CD4-positive, alpha-beta T cell (primary cell): ENCODE measurements at regions of chr5 and their contacts with region 1.

Region 1: GRCh38 chr5:157245477-157245876 is 20.4 kb upstream of the CYFIP2 start:
- DNase-seq: no peak
- ATAC-seq: no peak
- H3K4me3 ChIP-seq: no peak overlapping the region
- H3K4me3 Mint-ChIP-seq: no peak overlapping the region
- H3K27ac ChIP-seq: no peak overlapping the region
- H3K27ac Mint-ChIP-seq: peak overlapping the region; percentile 91
- H3K4me1 ChIP-seq: peaks cover 60% of the 10 kb centered on the region
- H3K4me1 Mint-ChIP-seq: peaks cover 68% of the 10 kb centered on the region
- H3K27me3 ChIP-seq: no peaks in the 10 kb centered on the region
- H3K27me3 Mint-ChIP-seq: no peaks in the 10 kb centered on the region
- CTCF ChIP-seq: no peak

Region 2: GRCh38 chr5:156774273-156774672 is 471.2 kb before region 1 on chr5:
- CTCF ChIA-PET with region 1: no interaction called
- POLR2A ChIA-PET with region 1: no interaction called
- intact Hi-C with region 1: no loop called
- DNase-seq: no peak
- ATAC-seq: no peak
- H3K4me3 ChIP-seq: no peak overlapping the region
- H3K4me3 Mint-ChIP-seq: no peak overlapping the region
- H3K27ac ChIP-seq: no peak overlapping the region
- H3K27ac Mint-ChIP-seq: no peak overlapping the region
- H3K4me1 ChIP-seq: no peaks in the 10 kb centered on the region
- H3K4me1 Mint-ChIP-seq: no peaks in the 10 kb centered on the region
- H3K27me3 ChIP-seq: no peaks in the 10 kb centered on the region
- H3K27me3 Mint-ChIP-seq: peaks cover 8% of the 10 kb centered on the region
- CTCF ChIP-seq: no peak

Region 3: GRCh38 chr5:157172403-157172802 is 73.1 kb before region 1 on chr5:
- CTCF ChIA-PET with region 1: no interaction called
- POLR2A ChIA-PET with region 1: interaction called, 11 read pairs
- intact Hi-C with region 1: no loop called
- DNase-seq: peak in 13 of 14 experiments; percentile 39 to 94 (median 58)
- ATAC-seq: peak; percentile 97
- H3K4me3 ChIP-seq: peak overlapping the region; percentile 27
- H3K4me3 Mint-ChIP-seq: peak overlapping the region; percentile 58
- H3K27ac ChIP-seq: peak overlapping the region; percentile 77 to 83
- H3K27ac Mint-ChIP-seq: peak overlapping the region; percentile 85
- H3K4me1 ChIP-seq: peaks cover 59% of the 10 kb centered on the region
- H3K4me1 Mint-ChIP-seq: peaks cover 76% of the 10 kb centered on the region
- H3K27me3 ChIP-seq: no peaks in the 10 kb centered on the region
- H3K27me3 Mint-ChIP-seq: no peaks in the 10 kb centered on the region
- CTCF ChIP-seq: no peak

Region 4: GRCh38 chr5:157189223-157189622 is 56.3 kb before region 1 on chr5:
- CTCF ChIA-PET with region 1: no interaction called
- POLR2A ChIA-PET with region 1: interaction called, 14 read pairs
- intact Hi-C with region 1: loop called in 1 of 2 experiments (anchors 5 kb)
- DNase-seq: peak in 1 of 14 experiments; percentile 42
- ATAC-seq: no peak
- H3K4me3 ChIP-seq: peak overlapping the region; percentile 85
- H3K4me3 Mint-ChIP-seq: peak overlapping the region; percentile 92
- H3K27ac ChIP-seq: peak overlapping the region; percentile 38 to 67
- H3K27ac Mint-ChIP-seq: peak overlapping the region; percentile 96
- H3K4me1 ChIP-seq: peaks cover 72% of the 10 kb centered on the region
- H3K4me1 Mint-ChIP-seq: peaks cover 92% of the 10 kb centered on the region
- H3K27me3 ChIP-seq: no peaks in the 10 kb centered on the region
- H3K27me3 Mint-ChIP-seq: no peaks in the 10 kb centered on the region
- CTCF ChIP-seq: no peak

Region 5: DNA sequence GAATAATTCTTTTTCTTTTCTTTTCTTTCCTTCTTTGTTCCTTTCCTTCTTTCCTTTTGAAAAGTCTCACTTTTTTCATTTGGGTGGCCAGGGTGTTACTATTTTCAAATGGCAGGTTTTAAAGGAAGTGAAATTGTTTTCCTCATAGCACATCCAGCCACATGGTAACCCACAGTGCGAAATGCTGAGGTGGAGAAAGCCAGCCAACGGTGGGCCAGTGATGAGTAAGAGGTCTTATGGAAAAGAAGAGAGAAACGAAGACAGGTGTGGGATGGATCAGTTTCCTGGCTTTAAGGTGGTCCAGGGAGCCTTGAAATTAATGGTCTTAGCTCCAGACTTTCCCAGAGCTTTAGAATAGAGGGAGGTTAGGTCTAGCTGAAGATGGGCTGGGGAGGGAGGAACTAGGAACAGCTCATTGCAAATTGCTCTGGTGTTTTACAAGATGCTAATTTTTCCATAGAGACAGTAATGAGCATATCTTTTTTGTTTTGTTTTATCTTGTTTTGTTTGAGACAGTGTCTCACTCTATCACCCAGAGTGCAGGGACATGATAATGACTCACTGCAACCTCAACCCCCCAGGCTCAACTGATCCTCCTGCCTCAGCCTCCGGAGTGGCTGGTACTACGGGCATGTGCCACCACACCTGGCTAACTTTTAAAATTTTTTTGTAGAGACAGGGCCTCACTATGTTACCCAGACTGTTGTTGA is 47.0 kb before region 1 on chr5:
- CTCF ChIA-PET with region 1: no interaction called
- POLR2A ChIA-PET with region 1: interaction called, 10 read pairs
- intact Hi-C with region 1: no loop called
- DNase-seq: peak in 13 of 14 experiments; percentile 31 to 80 (median 59)
- ATAC-seq: peak; percentile 39
- H3K4me3 ChIP-seq: no peak overlapping the region
- H3K4me3 Mint-ChIP-seq: peak overlapping the region; percentile 49
- H3K27ac ChIP-seq: peak overlapping the region; percentile 63 to 79
- H3K27ac Mint-ChIP-seq: peak overlapping the region; percentile 96
- H3K4me1 ChIP-seq: peaks cover 80% of the 10 kb centered on the region
- H3K4me1 Mint-ChIP-seq: peaks cover 99% of the 10 kb centered on the region
- H3K27me3 ChIP-seq: no peaks in the 10 kb centered on the region
- H3K27me3 Mint-ChIP-seq: no peaks in the 10 kb centered on the region
- CTCF ChIP-seq: no peak

Region 6: DNA sequence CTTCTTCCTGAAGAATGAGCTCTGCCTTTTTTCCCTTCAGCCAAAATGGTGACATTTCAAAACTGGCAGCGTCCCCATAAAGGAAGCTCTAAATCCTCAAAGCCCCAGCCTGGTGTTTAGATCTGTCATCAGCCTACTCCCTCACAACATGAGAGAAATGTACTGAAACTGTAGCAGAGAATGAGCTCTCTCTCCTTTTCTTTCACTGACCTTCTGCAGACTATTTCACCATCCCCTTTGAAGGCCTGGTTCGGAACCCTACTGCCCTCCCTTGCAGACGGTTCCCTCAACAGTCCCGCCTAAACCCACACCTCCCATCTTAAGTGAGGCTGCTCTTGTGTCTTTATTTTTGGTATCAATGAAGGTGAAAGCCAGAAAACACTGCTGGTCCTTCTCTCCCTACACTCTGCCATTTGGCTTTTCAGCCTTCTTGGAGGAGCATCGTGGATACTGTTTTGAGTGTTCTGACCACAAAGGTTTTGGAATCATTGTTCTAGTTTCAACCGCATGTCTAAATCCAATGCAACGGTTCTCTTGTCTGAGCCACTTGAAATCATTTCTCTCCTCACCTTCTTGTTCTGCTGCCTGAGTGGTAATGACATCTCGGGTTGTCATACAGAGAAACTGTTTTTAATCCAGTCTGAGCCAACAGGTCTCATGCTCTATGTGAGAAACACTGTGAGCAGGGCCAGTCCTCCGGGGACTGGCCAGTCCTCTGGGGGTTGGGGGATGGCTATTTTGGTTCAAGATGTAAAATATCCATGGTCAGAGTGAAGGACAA is 25.8 kb before region 1 on chr5:
- CTCF ChIA-PET with region 1: no interaction called
- POLR2A ChIA-PET with region 1: interaction called, 10 read pairs
- intact Hi-C with region 1: no loop called
- DNase-seq: no peak
- ATAC-seq: no peak
- H3K4me3 ChIP-seq: no peak overlapping the region
- H3K4me3 Mint-ChIP-seq: peak overlapping the region; percentile 27
- H3K27ac ChIP-seq: peak overlapping the region; percentile 70 to 72
- H3K27ac Mint-ChIP-seq: peak overlapping the region; percentile 80
- H3K4me1 ChIP-seq: peaks cover 99% of the 10 kb centered on the region
- H3K4me1 Mint-ChIP-seq: peaks cover 85% of the 10 kb centered on the region
- H3K27me3 ChIP-seq: no peaks in the 10 kb centered on the region
- H3K27me3 Mint-ChIP-seq: no peaks in the 10 kb centered on the region
- CTCF ChIP-seq: no peak

Region 7: DNA sequence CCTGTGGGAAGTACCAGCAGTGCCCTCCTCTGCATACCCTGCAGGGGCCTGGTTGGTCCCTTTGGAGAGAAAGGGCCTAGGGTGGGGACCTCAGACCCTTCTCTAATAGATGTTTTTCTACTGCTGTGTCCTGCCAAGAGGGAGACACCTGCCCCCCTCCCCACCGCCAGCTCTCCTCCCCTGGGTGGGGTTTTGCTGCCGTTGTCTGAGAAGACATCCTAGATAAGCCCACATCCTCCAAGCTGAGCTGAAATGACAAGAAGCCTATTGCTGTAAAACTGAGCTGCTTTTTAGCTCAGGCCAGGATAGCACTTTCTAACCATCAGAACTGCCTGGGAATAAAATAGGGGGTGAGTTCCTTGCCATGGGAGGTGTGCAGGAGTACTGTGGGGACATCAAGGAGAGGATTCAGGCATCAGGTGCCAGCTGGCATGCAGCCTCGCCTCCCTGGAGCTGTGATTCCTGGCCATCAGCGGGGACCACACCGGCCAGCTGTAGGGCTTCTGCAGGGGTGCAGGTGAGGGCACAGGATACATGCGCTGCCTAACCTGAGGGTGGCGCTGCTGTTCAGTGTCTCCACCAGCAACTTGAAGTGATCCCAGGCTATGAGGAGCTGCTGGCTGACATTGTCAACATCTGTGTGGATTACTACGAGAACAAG is 58.3 kb after region 1 on chr5:
- CTCF ChIA-PET with region 1: interaction called, 5 read pairs
- POLR2A ChIA-PET with region 1: interaction called, 13 read pairs
- intact Hi-C with region 1: no loop called
- DNase-seq: peak; percentile 45 to 86 (median 56)
- ATAC-seq: peak; percentile 72
- H3K4me3 ChIP-seq: peak overlapping the region; percentile 42
- H3K4me3 Mint-ChIP-seq: peak overlapping the region; percentile 87
- H3K27ac ChIP-seq: peak overlapping the region; percentile 54 to 65
- H3K27ac Mint-ChIP-seq: peak overlapping the region; percentile 80
- H3K4me1 ChIP-seq: peaks cover 57% of the 10 kb centered on the region
- H3K4me1 Mint-ChIP-seq: peaks cover 70% of the 10 kb centered on the region
- H3K27me3 ChIP-seq: no peaks in the 10 kb centered on the region
- H3K27me3 Mint-ChIP-seq: no peaks in the 10 kb centered on the region
- CTCF ChIP-seq: peak; percentile 26

Region 8: GRCh38 chr5:157378502-157378901 is 133.0 kb after region 1 on chr5:
- CTCF ChIA-PET with region 1: no interaction called
- POLR2A ChIA-PET with region 1: no interaction called
- intact Hi-C with region 1: no loop called
- DNase-seq: no peak
- ATAC-seq: no peak
- H3K4me3 ChIP-seq: no peak overlapping the region
- H3K4me3 Mint-ChIP-seq: no peak overlapping the region
- H3K27ac ChIP-seq: no peak overlapping the region
- H3K27ac Mint-ChIP-seq: peak overlapping the region; percentile 64
- H3K4me1 ChIP-seq: no peaks in the 10 kb centered on the region
- H3K4me1 Mint-ChIP-seq: no peaks in the 10 kb centered on the region
- H3K27me3 ChIP-seq: no peaks in the 10 kb centered on the region
- H3K27me3 Mint-ChIP-seq: no peaks in the 10 kb centered on the region
- CTCF ChIP-seq: no peak